ENCODE measurements at regions of chr1 and their contacts with region 1.

Region 1: GRCh38 chr1:192311281-192311680 is 5.5 kb upstream of the RGS21 start:
- DNase-seq: peak; percentile 84
- H3K4me3 ChIP-seq: no peak overlapping the region
- H3K27ac ChIP-seq: no peak overlapping the region
- H3K4me1 ChIP-seq: no peaks in the 10 kb centered on the region
- H3K27me3 ChIP-seq: no peaks in the 10 kb centered on the region
- CTCF ChIP-seq: peak; percentile 50 to 55
- POLR2A ChIP-seq: no peak

Region 2: DNA sequence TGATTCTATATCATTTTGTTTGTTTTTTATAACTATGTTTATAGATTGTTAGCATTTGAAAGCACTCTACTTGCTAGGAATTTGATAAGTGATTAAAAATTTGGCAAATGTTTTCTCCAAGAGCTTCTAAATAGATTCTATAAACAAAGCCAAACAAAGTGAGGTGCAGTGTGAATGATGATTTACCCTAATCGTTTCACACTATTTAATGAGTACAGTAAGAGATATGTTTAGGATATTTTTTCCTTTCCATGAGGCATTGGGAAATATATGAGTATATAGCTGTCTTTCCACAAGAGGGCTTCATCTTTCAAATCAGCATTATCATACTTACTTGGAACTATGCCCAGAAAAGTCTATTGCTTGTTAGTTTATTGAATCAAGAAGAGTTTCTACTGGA is 1556.6 kb before region 1 on chr1:
- CTCF ChIA-PET with region 1: interaction called, 3 read pairs
- POLR2A ChIA-PET with region 1: no interaction called
- dilution Hi-C with region 1: no loop called
- intact Hi-C with region 1: loop called (anchors 10 kb)
- DNase-seq: peak; percentile 61
- H3K4me3 ChIP-seq: no peak overlapping the region
- H3K27ac ChIP-seq: no peak overlapping the region
- H3K4me1 ChIP-seq: no peaks in the 10 kb centered on the region
- H3K27me3 ChIP-seq: no peaks in the 10 kb centered on the region
- CTCF ChIP-seq: no peak
- POLR2A ChIP-seq: no peak

Region 3: DNA sequence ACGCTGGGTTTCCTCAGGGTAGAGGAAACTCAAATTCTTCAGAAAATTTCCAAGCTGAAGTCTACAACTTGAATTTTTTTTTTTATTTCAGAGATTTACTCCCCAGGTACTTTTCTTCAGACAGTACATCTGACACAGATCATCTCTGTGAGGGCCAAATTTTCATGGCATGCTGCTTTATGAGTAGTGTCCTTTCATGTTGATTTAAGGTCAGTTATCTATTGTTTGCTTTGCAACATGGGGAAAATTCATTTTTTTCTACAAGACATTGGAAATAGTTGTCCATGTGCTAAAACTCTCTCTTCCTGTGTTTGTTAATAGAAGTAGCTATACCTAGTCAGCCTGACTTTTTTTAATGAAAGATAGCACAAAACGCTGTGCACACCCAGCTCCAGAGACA is 546.0 kb before region 1 on chr1:
- CTCF ChIA-PET with region 1: no interaction called
- POLR2A ChIA-PET with region 1: no interaction called
- dilution Hi-C with region 1: no loop called
- intact Hi-C with region 1: loop called (anchors 10 kb)
- DNase-seq: no peak
- H3K4me3 ChIP-seq: no peak overlapping the region
- H3K27ac ChIP-seq: no peak overlapping the region
- H3K4me1 ChIP-seq: no peaks in the 10 kb centered on the region
- H3K27me3 ChIP-seq: no peaks in the 10 kb centered on the region
- CTCF ChIP-seq: no peak
- POLR2A ChIP-seq: no peak

Region 4: GRCh38 chr1:191895462-191896058 is 415.7 kb before region 1 on chr1:
- CTCF ChIA-PET with region 1: interaction called, 4 read pairs
- POLR2A ChIA-PET with region 1: no interaction called
- dilution Hi-C with region 1: no loop called
- intact Hi-C with region 1: loop called (anchors 10 kb)
- DNase-seq: no peak
- H3K4me3 ChIP-seq: no peak overlapping the region
- H3K27ac ChIP-seq: no peak overlapping the region
- H3K4me1 ChIP-seq: no peaks in the 10 kb centered on the region
- H3K27me3 ChIP-seq: no peaks in the 10 kb centered on the region
- CTCF ChIP-seq: no peak
- POLR2A ChIP-seq: no peak

Region 5: GRCh38 chr1:191993549-191993948 is 317.7 kb before region 1 on chr1:
- CTCF ChIA-PET with region 1: interaction called, 45 read pairs
- POLR2A ChIA-PET with region 1: no interaction called
- dilution Hi-C with region 1: no loop called
- intact Hi-C with region 1: loop called (anchors 1 kb)
- DNase-seq: peak; percentile 58
- H3K4me3 ChIP-seq: no peak overlapping the region
- H3K27ac ChIP-seq: no peak overlapping the region
- H3K4me1 ChIP-seq: no peaks in the 10 kb centered on the region
- H3K27me3 ChIP-seq: no peaks in the 10 kb centered on the region
- CTCF ChIP-seq: peak in 1 of 2 donors; percentile 15
- POLR2A ChIP-seq: no peak